HEK293 (cell line): ENCODE measurements at regions of chr19 and their contacts with region 1.

Region 1: DNA sequence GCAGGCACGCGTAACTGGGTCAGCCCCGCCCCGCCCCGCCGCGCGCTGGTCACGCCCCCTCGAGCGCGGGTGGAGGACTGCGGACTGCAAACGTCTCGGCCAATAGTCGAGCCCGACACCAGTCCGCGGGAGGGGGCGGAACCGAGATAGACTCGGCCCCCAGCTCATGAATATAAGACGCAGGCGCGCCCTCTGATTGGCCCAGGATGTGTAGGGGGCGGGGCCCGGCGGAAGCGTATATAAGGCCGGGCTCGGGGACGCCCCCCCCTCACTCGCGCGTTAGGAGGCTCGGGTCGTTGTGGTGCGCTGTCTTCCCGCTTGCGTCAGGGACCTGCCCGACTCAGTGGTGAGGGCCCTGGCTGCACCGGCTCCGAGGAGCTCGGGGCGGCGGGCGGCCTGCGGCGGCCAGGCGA is at the start of gene CIRBP:
- H3K4me3 ChIP-seq: peak within 1 kb of the TSS; percentile 44
- H3K27ac ChIP-seq: peak within 1 kb of the TSS; percentile 99
- H3K4me1 ChIP-seq: peaks cover 20% of the 10 kb centered on the region
- CTCF ChIP-seq: no peak

Region 2: DNA sequence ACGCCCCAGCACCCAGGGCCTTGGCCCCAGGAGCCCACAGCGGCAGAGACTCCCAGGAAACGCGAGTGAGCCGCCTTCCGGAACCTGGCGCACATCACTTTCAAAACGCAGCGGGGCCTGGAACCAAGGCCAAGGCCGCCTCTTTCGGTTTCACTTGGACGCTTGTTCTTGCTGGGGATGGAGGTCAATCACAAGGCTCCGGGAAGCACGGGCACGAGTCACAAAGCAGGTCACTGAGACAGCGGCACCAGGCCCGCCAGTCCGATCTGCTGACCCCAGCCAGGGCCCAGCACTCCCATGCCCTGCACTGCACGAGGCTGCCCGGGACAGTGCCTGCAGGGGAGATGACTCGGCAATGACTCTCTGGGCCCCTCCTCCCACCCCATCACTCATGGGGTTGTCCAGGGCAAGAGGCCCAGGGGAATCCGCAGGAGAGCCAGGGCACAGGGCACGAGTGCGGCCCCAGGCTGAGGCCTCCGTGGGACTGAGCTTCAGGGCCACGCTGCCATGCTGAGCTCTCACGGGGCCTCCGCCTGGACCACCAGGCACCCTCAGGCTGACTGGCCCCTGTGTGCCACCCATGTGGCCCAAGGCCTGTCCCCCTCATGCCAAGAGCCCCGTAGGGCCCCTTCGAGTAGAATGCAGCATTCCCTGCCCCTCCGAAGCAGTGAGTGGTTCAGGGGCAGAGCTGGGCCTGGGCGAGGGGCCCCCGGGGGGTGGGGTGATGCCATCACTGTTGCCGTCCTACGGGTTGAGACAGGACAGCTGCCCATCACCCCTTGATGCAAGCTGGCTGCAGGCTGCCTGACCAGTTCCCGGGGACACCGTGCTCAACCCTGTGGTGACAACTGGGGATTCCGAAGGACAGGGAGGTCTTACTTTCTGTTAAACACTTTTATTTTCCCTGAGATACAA is 99.9 kb before region 1 on chr19:
- CTCF ChIA-PET with region 1: no interaction called
- POLR2A ChIA-PET with region 1: no interaction called
- H3K4me3 ChIP-seq: no peak overlapping the region
- H3K27ac ChIP-seq: 0 out of 2 replicates have a peak overlapping the region, but pooled peaks have one; percentile 7
- H3K4me1 ChIP-seq: peaks cover 4% of the 10 kb centered on the region
- CTCF ChIP-seq: no peak

Region 3: GRCh38 chr19:1213391-1214286 is 55.4 kb before region 1 on chr19:
- CTCF ChIA-PET with region 1: interaction called, 3 read pairs
- POLR2A ChIA-PET with region 1: interaction called, 18 read pairs
- H3K4me3 ChIP-seq: no peak overlapping the region
- H3K27ac ChIP-seq: peak overlapping the region; percentile 51
- H3K4me1 ChIP-seq: peaks cover 12% of the 10 kb centered on the region; the same call in 1 of the 2 replicates
- CTCF ChIP-seq: no peak

Region 4: GRCh38 chr19:1249298-1249989 is 19.6 kb before region 1 on chr19:
- CTCF ChIA-PET with region 1: interaction called, 299 read pairs
- POLR2A ChIA-PET with region 1: interaction called, 407 read pairs
- H3K4me3 ChIP-seq: peak overlapping the region; percentile 92
- H3K27ac ChIP-seq: peak overlapping the region; percentile 100
- H3K4me1 ChIP-seq: peaks cover 8% of the 10 kb centered on the region
- CTCF ChIP-seq: peak; percentile 19; the same call in 1 of the 2 replicates

Region 5: GRCh38 chr19:1312767-1313694 is 44.0 kb after region 1 on chr19:
- CTCF ChIA-PET with region 1: interaction called, 3 read pairs
- POLR2A ChIA-PET with region 1: interaction called, 11 read pairs
- H3K4me3 ChIP-seq: no peak overlapping the region
- H3K27ac ChIP-seq: no peak overlapping the region
- H3K4me1 ChIP-seq: no peaks in the 10 kb centered on the region
- CTCF ChIP-seq: no peak